ENCODE measurements at regions of chr1 and their contacts with region 1.

Region 1: GRCh38 chr1:44002606-44003157 is 11.3 kb downstream of the CCDC24 start:
- DNase-seq: no peak
- H3K4me3 ChIP-seq: no peak overlapping the region
- H3K27ac ChIP-seq: no peak overlapping the region
- H3K4me1 ChIP-seq: no peaks in the 10 kb centered on the region
- H3K27me3 ChIP-seq: no peaks in the 10 kb centered on the region
- CTCF ChIP-seq: no peak

Region 2: DNA sequence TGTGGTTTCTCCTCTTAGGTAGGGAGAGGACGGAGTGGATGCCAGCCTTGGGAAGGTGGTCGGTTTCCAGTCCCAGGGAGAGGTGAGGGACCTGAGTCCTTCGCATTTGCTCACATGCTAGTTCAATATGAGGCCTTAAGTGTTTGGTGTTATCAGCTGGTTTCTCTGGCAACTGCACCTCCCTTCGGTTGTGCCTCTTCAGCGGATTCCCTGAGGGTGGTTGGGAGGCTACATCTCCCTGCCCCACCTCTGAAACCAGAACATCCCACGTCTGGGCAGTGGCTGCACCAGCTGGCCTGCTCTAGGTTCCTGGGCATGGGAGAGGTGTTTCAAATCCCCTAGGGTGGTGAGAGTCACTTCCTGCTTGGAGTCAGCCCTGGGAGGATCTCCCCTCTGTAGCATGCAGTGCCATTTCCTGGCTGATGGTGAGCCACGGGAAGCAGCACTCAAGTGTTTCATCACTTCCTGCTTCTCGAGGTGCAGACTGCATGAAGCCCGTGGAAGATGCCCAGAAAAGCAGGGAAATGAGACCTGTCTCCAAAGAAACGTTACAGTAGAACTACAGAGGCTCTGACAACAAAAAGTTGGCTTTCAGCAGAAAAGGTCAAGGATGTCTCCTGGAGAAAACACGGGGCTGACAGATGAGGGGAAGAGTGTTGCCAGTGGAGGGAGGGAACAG is 728.4 kb before region 1 on chr1:
- intact Hi-C with region 1: no loop called
- DNase-seq: no peak
- H3K4me3 ChIP-seq: no peak overlapping the region
- H3K27ac ChIP-seq: no peak overlapping the region
- H3K4me1 ChIP-seq: no peaks in the 10 kb centered on the region
- H3K27me3 ChIP-seq: no peaks in the 10 kb centered on the region
- CTCF ChIP-seq: no peak

Region 3: DNA sequence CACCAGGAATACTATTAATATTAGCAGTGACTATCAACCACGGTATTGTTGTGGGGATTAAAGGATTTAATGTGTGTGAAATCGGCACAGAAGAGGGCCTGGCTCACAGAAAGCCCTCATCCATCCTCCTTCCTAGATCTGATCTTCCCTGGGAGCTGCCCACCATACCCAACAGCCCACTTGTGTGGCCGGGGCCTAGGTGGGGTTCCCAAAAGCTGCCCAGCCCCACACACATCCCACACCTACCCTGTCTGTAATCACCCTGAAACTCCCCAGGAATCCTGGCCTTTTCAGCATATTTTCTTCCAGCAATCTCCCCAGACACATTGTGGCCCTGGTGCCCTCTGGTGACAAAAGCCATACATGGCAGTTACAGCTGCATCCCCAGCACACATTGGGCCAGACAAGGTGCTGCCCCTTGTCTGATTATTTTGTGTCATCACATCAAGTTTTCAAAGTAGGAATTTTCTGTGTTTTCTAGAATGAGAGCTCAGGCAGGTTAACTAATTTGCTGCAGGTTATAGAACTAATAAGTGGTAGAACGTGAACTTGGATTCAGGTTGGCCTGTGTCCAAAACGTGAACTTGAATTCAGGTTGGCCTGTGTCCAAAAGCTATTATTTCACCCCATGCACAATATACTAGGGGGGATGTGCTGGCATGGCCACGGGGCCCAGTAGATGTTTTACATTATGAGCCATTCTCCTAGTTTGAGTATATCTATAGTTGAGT is 33.9 kb after region 1 on chr1:
- intact Hi-C with region 1: loop called (anchors 2 kb)
- DNase-seq: peak; percentile 85
- H3K4me3 ChIP-seq: no peak overlapping the region
- H3K27ac ChIP-seq: no peak overlapping the region
- H3K4me1 ChIP-seq: peaks cover 5% of the 10 kb centered on the region
- H3K27me3 ChIP-seq: no peaks in the 10 kb centered on the region
- CTCF ChIP-seq: peak; percentile 83

Region 4: DNA sequence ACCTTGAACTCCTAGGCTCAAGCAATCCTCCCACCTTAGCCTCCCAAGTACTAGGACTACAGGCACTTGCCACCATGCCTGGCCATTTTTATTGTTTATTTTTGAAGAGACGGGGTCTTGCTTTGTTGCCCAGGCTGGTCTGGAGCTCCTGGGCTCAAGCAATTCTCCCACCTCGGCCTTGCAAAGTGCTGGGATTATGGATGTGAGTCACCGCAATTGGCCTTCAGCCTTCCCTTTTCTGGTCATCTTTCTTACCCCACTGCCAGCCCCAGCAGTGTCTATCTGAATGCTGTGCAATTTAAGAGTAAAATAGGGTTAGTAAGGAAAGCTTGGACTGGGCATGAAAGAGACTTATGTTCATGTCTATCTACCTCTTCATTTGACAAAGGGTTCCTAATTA is 109.8 kb after region 1 on chr1:
- intact Hi-C with region 1: no loop called
- DNase-seq: no peak
- H3K4me3 ChIP-seq: no peak overlapping the region
- H3K27ac ChIP-seq: no peak overlapping the region
- H3K4me1 ChIP-seq: no peaks in the 10 kb centered on the region
- H3K27me3 ChIP-seq: no peaks in the 10 kb centered on the region
- CTCF ChIP-seq: no peak